ENCODE measurements at regions of chr2 and their contacts with region 1.

Region 1: GRCh38 chr2:8761529-8762164 is 75.8 kb downstream of the KIDINS220 start:
- DNase-seq: peak; percentile 76
- H3K4me3 ChIP-seq: no peak overlapping the region
- H3K27ac ChIP-seq: no peak overlapping the region
- H3K4me1 ChIP-seq: peaks cover 13% of the 10 kb centered on the region
- H3K27me3 ChIP-seq: no peaks in the 10 kb centered on the region
- CTCF ChIP-seq: peak; percentile 79

Region 2: GRCh38 chr2:7097348-7097895 is 1664.2 kb before region 1 on chr2:
- CTCF ChIA-PET with region 1: no interaction called
- POLR2A ChIA-PET with region 1: no interaction called
- intact Hi-C with region 1: loop called (anchors 5 kb)
- DNase-seq: peak; percentile 80
- H3K4me3 ChIP-seq: peak overlapping the region; percentile 18
- H3K27ac ChIP-seq: no peak overlapping the region
- H3K4me1 ChIP-seq: peaks cover 12% of the 10 kb centered on the region
- H3K27me3 ChIP-seq: no peaks in the 10 kb centered on the region
- CTCF ChIP-seq: peak; percentile 99

Region 3: DNA sequence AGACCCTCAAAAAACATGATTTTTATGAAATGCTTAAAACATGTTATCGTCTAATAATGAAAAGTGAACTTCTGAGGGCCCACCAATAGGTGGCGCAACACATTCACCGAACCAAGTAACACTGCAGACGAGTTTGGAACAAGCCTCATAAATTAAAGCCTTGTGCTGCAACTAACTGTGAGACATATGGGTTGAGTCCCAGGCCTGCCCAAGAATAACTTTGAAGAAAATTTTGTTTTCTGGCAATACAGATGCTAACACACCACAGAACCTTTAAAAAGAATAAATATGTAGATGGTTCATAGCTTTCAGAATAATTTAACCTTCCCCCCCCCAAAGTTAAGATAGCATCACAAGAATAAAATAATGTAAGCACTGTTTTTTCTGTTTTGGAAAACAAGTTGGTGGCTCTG is 1558.6 kb before region 1 on chr2:
- CTCF ChIA-PET with region 1: no interaction called
- POLR2A ChIA-PET with region 1: no interaction called
- intact Hi-C with region 1: loop called (anchors 2 kb)
- DNase-seq: peak; percentile 83
- H3K4me3 ChIP-seq: no peak overlapping the region
- H3K27ac ChIP-seq: peak overlapping the region; percentile 75
- H3K4me1 ChIP-seq: peaks cover 43% of the 10 kb centered on the region
- H3K27me3 ChIP-seq: no peaks in the 10 kb centered on the region
- CTCF ChIP-seq: peak; percentile 95

Region 4: GRCh38 chr2:8693155-8693821 is 68.4 kb before region 1 on chr2:
- CTCF ChIA-PET with region 1: interaction called, 4 read pairs
- POLR2A ChIA-PET with region 1: no interaction called
- intact Hi-C with region 1: loop called (anchors 2 kb)
- DNase-seq: peak; percentile 51
- H3K4me3 ChIP-seq: peak overlapping the region; percentile 4
- H3K27ac ChIP-seq: no peak overlapping the region
- H3K4me1 ChIP-seq: peaks cover 4% of the 10 kb centered on the region
- H3K27me3 ChIP-seq: no peaks in the 10 kb centered on the region
- CTCF ChIP-seq: peak; percentile 75

Measured in A673 (cell line).